ENCODE measurements at regions of chr6 and their contacts with region 1.

Region 1: DNA sequence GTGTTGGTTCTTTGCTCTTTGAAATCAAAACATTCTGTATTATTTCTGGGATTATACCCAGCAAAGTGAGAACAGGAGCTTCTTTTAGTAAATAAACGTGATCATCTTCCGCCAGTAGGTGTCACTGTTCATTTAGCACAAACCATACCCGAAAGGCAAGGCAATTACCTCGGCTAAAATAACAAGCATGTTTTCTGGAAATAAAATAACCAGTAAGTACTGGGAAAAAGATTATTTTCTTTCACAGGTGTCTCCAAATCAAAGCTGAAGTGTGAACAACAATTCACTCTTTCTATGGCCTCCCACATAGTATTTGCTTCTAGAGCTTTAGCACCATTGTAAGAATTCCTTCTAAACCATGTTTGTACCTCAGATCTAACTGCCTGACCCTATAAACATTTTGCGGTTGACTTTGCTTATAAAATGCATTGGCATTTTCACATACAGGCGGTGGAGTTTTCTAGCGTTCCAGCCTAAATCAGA is 144.6 kb upstream of the AGPAT4 start:
- DNase-seq: no peak
- H3K4me3 ChIP-seq: no peak overlapping the region
- H3K27ac ChIP-seq: no peak overlapping the region
- H3K4me1 ChIP-seq: peaks cover 0 to 4% (median under 1%) of the 10 kb centered on the region in 4 experiments; a peak in 3 of 7 replicates
- H3K27me3 ChIP-seq: no peaks in the 10 kb centered on the region
- CTCF ChIP-seq: peak in 2 of 3 experiments; percentile 57 to 69; a peak in 3 of 4 replicates
- EP300 ChIP-seq: no peak
- POLR2A ChIP-seq: no peak
- RAD21 ChIP-seq: peak; percentile 76 to 80

Region 2: GRCh38 chr6:161333410-161333809 is 85.1 kb before region 1 on chr6:
- CTCF ChIA-PET with region 1: no interaction called
- POLR2A ChIA-PET with region 1: no interaction called
- DNase-seq: no peak
- H3K4me3 ChIP-seq: no peak overlapping the region
- H3K27ac ChIP-seq: no peak overlapping the region
- H3K4me1 ChIP-seq: no peaks in the 10 kb centered on the region
- H3K27me3 ChIP-seq: no peaks in the 10 kb centered on the region
- CTCF ChIP-seq: no peak
- EP300 ChIP-seq: no peak
- POLR2A ChIP-seq: no peak
- RAD21 ChIP-seq: no peak

Region 3: DNA sequence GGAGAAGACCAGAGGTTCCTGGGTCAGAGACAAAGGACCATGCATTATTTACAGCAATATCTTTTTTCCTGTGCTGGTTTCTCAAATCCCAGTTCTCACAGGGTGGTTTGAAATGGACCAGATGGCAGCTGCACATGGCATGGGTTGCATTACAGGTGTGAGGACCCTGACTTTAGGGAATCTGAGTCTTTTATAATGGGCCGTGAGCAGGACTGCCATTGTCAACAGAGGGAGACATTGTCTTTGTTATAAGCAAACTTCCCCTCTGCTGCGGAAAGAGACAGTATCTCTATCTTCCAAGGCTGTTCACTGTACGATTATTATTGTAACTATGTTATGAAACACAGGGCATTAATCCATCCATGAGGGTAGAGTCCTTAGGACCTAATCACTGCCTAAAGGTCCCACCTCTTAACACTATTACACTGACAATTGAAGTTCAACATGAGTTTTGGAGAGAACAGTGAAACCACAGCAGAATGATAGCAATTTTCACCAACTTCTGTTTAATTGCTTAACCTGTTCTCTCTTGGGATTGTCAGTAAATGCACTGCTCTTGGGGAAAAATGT is 11.5 kb after region 1 on chr6:
- CTCF ChIA-PET with region 1: interaction called, 35 read pairs
- POLR2A ChIA-PET with region 1: interaction called, 4 read pairs
- DNase-seq: no peak
- H3K4me3 ChIP-seq: no peak overlapping the region
- H3K27ac ChIP-seq: no peak overlapping the region
- H3K4me1 ChIP-seq: no peaks in the 10 kb centered on the region
- H3K27me3 ChIP-seq: no peaks in the 10 kb centered on the region
- CTCF ChIP-seq: peak in 2 of 3 experiments; percentile 24 to 48; a peak in 2 of 4 replicates
- EP300 ChIP-seq: no peak
- POLR2A ChIP-seq: no peak
- RAD21 ChIP-seq: peak; percentile 58 to 67

Region 4: GRCh38 chr6:161444464-161444863 is 26.0 kb after region 1 on chr6:
- CTCF ChIA-PET with region 1: interaction called, 28 read pairs
- POLR2A ChIA-PET with region 1: no interaction called
- DNase-seq: peak in 1 of 2 experiments; percentile 54
- H3K4me3 ChIP-seq: no peak overlapping the region; a peak in 1 of 8 replicates
- H3K27ac ChIP-seq: no peak overlapping the region
- H3K4me1 ChIP-seq: peaks cover 2 to 9% (median 6%) of the 10 kb centered on the region in 4 experiments; a peak in 5 of 7 replicates
- H3K27me3 ChIP-seq: peaks cover 0 to 4% (median under 1%) of the 10 kb centered on the region in 4 experiments; a peak in 1 of 7 replicates
- CTCF ChIP-seq: no peak
- EP300 ChIP-seq: no peak
- POLR2A ChIP-seq: no peak
- RAD21 ChIP-seq: peak in 1 of 2 experiments; percentile 19; a peak in 1 of 4 replicates

Region 5: GRCh38 chr6:161498359-161498758 is 79.9 kb after region 1 on chr6:
- CTCF ChIA-PET with region 1: interaction called, 29 read pairs
- POLR2A ChIA-PET with region 1: no interaction called
- DNase-seq: peak; percentile 51 to 60
- H3K4me3 ChIP-seq: no peak overlapping the region
- H3K27ac ChIP-seq: no peak overlapping the region
- H3K4me1 ChIP-seq: no peaks in the 10 kb centered on the region
- H3K27me3 ChIP-seq: no peaks in the 10 kb centered on the region
- CTCF ChIP-seq: peak; percentile 68 to 78 (median 72)
- EP300 ChIP-seq: no peak
- POLR2A ChIP-seq: no peak
- RAD21 ChIP-seq: peak; percentile 81 to 82

Measured in H1 (cell line).